ENCODE measurements at regions of chr1 and their contacts with region 1.

Region 1: DNA sequence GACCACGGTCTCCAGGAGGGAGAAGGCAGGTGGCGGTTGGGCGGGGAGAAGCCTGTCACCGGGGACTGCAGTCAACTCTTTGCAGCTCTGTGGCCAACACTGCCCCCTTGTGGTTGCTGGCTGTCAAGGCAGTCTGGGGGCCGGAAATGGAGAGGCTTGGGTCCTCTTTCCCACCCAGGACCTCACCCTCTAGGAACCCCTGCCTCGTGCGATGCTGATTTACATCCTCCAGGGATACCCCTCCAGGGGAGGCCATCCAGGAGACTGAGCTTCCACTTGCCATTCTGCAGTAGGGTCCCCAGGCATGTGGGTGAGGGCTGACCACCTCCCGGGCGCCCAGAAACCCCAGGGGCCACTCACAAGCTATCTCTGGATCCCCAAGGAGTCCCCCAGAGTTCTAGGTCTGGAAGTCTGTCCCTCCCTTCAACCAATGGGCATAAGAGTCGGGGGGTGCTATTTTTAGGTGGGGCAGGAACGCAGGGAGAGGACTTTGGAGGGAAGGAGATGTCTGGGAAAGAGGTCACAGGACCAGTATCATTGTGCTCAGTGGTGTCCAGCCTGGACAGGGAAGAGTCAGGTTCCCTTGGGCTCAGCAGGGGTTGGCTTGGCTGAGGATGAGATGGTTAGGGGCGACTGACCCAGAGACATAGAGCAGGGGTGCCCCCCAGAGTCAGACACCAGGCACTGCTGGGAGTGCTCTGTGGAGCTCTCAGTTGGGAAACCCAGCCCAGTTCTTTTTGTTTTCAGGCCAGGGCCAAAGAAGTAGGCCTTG is 7.1 kb upstream of the GPR61 start:
- DNase-seq: peak; percentile 78 to 94 (median 91)
- ATAC-seq: peak; percentile 84 to 85
- H3K4me3 ChIP-seq: peak overlapping the region; percentile 4
- H3K27ac ChIP-seq: peak overlapping the region; percentile 34
- H3K4me1 ChIP-seq: no peaks in the 10 kb centered on the region
- H3K27me3 ChIP-seq: no peaks in the 10 kb centered on the region

Region 2: GRCh38 chr1:109263597-109264398 is 268.8 kb before region 1 on chr1:
- intact Hi-C with region 1: loop called in 1 of 4 experiments (anchors 5 kb)
- DNase-seq: peak; percentile 81 to 94 (median 93)
- ATAC-seq: peak; percentile 86 to 92
- H3K4me3 ChIP-seq: no peak overlapping the region
- H3K27ac ChIP-seq: no peak overlapping the region
- H3K4me1 ChIP-seq: no peaks in the 10 kb centered on the region
- H3K27me3 ChIP-seq: no peaks in the 10 kb centered on the region

Region 3: GRCh38 chr1:109493805-109494539 is 38.6 kb before region 1 on chr1 and contains the start of gene CYB561D1:
- intact Hi-C with region 1: loop called (anchors 2 to 5 kb)
- DNase-seq: peak; percentile 90 to 96 (median 95)
- ATAC-seq: peak; percentile 93
- H3K4me3 ChIP-seq: peak within 1 kb of the TSS; percentile 52
- H3K27ac ChIP-seq: peak within 1 kb of the TSS; percentile 21
- H3K4me1 ChIP-seq: peaks cover 4% of the 10 kb centered on the region
- H3K27me3 ChIP-seq: no peaks in the 10 kb centered on the region
- total RNA-seq, gene CYB561D1: 4.9 to 6.6 (median 5.5) TPM

Region 4: GRCh38 chr1:109499661-109500536 is 32.7 kb before region 1 on chr1:
- intact Hi-C with region 1: loop called in 2 of 4 experiments (anchors 2 kb)
- DNase-seq: peak in 1 of 3 donors; percentile 62
- ATAC-seq: peak in 1 of 2 donors; percentile 7
- H3K4me3 ChIP-seq: no peak overlapping the region
- H3K27ac ChIP-seq: no peak overlapping the region
- H3K4me1 ChIP-seq: no peaks in the 10 kb centered on the region
- H3K27me3 ChIP-seq: no peaks in the 10 kb centered on the region